HEK293T (cell line): ENCODE measurements at regions of chr6 and their contacts with region 1.

Region 1: GRCh38 chr6:32952817-32953739 is at the start of gene HLA-DMA:
- DNase-seq: peak; percentile 55

Region 2: GRCh38 chr6:32838114-32838958 is 114.7 kb before region 1 on chr6 and contains the start of gene TAP2:
- CTCF ChIA-PET with region 1: interaction called, 10 read pairs
- POLR2A ChIA-PET with region 1: no interaction called
- DNase-seq: peak; percentile 93

Region 3: GRCh38 chr6:32894080-32895005 is 58.7 kb before region 1 on chr6:
- CTCF ChIA-PET with region 1: interaction called, 3 read pairs
- POLR2A ChIA-PET with region 1: interaction called, 19 read pairs
- DNase-seq: peak; percentile 99

Region 4: DNA sequence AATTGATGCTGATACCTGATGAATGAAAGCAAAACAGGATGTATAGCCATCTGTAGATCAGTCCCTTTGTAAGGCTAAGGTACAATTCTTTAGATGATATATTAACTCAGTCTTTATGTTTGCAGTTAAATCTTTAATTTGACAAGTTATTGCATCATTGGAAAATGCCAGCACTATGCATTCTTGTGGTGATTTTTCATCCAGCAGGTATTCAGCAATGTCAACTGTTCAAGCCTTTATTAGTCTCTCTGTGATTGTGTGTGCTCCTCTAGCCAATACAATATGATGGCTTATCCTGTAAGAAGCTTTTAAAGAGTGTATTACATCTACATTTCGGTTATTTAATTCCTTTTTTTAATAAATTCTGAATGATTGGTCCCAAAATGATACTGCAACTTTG is 46.5 kb before region 1 on chr6:
- CTCF ChIA-PET with region 1: interaction called, 10 read pairs
- POLR2A ChIA-PET with region 1: no interaction called
- DNase-seq: no peak

Region 5: DNA sequence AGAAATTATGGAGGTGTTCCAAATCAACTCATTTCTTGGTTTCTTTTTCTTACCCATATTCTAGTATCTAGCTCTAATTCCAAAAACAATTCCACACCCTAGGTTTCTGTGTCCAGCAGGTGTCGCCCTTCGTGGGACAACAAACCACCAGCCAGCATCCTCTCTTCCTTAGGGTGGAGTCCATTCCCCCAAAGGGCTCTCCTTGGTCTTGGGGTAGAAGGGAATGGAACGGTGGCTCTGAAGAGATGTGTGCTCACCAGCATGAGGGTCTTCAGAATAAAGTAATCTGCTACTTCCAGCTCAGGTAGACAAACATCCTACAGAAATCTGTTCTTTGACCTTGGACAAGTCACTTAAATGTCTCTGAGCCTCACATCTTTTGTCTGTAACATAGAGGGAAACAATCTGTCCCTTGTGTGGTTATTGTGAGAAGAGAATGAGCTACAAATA is 19.4 kb before region 1 on chr6:
- CTCF ChIA-PET with region 1: interaction called, 24 read pairs
- POLR2A ChIA-PET with region 1: no interaction called
- DNase-seq: peak; percentile 78

Region 6: DNA sequence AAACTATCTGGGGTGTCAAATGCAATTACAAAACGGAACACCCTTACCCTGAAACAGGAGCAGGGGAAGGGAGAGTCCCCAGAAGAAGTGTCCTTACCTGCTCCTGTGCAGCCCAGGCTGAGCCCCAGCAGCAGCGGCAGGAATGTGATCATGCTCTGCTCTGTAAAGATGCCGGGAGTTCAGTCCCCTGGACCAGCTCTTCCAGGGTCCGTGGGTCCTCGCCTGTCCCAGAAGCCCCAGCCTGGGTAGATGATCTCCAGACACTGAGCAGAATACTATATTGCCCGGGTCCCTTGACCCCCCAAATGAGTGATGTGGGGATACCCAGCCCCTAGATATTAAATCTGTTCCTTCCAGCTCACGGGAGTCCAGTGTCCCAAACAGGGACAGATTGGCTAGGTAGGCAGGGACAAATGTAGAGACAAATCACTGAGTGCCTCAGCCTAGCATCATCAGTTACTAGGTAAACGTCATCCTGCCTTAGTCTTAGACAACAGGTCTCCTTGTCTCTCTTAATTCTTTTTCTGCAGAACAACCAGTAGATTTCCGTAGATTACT is 12.3 kb before region 1 on chr6 and contains the start of gene HLA-DMB:
- CTCF ChIA-PET with region 1: interaction called, 11 read pairs
- POLR2A ChIA-PET with region 1: interaction called, 7 read pairs
- DNase-seq: peak; percentile 92

Region 7: DNA sequence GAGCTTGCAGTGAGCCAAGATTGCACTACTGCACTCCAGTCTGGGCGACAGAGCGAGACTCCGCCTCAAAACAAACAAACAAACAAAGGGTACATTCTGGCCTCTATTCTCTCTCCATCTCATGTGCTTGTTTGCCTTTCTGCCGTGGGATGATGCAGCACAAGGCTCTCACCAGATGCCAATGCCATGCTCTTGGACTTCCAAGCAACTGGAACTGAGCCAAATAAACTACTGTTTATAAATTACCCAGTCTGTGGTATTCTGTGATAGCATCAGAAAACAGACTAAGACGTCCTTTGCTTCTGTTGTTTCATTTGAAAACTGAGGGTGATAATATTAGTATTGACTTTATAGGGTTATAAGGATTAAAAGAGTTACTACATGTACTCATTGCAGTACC is 11.7 kb after region 1 on chr6:
- CTCF ChIA-PET with region 1: interaction called, 23 read pairs
- POLR2A ChIA-PET with region 1: interaction called, 208 read pairs
- DNase-seq: no peak